ENCODE measurements at regions of chr14 and their contacts with region 1.

Region 1: DNA sequence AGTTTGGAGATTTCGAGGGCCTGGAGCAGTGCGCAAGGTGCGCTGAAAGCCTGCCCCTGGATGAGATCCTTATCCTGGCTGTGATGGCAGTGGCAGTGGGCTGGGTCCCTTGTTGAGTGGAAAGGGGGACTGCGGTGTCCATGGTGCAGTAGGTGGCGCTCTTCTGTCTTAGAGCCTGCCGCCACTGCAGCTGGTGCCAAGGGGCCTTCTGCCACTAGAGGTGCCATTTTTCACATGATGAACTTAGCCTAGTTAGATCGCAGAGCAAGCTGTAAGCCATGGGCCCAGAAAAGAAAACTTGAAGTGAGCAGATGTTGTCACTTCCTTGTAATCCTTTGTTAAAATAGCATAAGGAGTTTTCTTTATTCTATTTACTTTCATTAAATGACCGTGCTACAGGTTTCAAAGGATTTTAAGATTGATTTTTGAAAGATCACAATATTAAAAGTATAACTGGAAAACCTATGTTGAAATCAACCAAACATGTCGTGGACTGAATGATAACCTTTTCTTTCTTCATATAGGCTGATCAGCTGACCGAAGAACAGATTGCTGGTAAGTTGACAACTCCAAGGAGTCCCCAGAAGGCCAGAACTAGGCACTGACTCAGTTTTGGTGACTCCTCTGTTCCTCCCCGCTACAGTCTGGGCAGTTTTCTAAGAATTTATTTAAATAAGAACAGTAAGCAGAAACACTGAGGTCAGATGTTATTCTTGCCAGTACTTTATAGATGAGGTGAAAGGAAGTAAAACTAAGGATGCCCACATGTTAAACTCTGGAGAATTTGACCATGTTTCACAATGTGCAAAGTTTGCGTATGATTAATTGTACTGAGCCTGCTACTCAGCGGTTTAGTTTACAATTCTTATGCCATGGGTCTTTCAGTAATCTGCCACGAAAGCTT is 3.0 kb downstream of the CALM1 start:
- DNase-seq: peak; percentile 92
- ATAC-seq: peak; percentile 39
- H3K4me3 ChIP-seq: peak overlapping the region in 1 of 5 experiments; percentile 85
- H3K4me3 Mint-ChIP-seq: peak overlapping the region; percentile 96
- H3K27ac ChIP-seq: peak overlapping the region; percentile 93 to 95
- H3K27ac Mint-ChIP-seq: peak overlapping the region; percentile 98
- H3K4me1 ChIP-seq: peaks cover 39 to 45% of the 10 kb centered on the region in 2 donors
- H3K4me1 Mint-ChIP-seq: peaks cover 46% of the 10 kb centered on the region
- H3K27me3 ChIP-seq: no peaks in the 10 kb centered on the region
- H3K27me3 Mint-ChIP-seq: no peaks in the 10 kb centered on the region
- CTCF ChIP-seq: peak; percentile 100

Region 2: DNA sequence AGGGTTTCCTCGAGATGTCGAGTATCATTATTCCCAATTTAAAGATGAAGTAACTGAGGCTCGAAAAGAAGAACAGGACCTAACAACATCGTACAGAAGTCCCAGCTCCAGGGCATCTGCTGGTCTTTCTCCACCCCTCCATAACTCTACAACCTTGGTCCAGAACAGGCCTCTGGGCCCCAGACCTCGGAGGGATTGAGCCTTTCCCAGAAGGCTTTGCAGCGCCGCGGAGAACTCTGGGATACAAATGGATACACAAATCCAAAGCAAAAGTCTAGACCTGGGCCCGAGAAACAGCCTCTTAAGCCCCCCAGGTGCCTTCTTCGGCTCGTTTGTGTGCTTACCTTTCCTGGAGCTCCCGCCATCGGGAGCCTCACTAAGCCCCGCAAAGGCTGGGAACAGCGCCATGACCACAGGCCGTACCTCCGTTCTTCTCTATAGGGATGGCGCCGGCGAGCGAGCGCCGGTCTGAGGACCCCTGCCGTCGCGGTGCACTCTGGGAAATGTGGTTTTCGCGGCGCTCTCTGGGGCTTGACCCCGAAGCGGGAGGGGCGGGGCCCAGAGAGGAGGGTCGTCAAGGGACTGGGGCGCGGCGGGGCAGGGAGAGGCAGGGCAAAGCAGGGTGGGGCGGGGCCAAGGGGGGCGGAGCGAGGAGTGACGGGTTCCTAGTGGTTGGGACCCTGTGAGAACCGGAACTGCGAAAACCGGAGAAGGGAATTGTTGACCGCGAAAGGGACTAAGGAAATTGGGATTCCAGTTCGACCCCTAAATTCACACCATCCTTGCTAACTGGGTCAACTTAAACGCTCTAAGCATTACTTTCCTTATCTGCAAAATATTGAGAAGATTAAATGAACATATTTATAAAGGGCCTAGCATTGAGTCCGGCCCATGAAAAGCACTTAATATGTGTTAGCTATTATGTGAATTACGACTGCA is 68.0 kb before region 1 on chr14 and contains the start of gene NRDE2:
- CTCF ChIA-PET with region 1: interaction called, 6 read pairs
- POLR2A ChIA-PET with region 1: no interaction called
- intact Hi-C with region 1: loop called (anchors 1 kb)
- DNase-seq: peak; percentile 95
- ATAC-seq: peak; percentile 98
- H3K4me3 ChIP-seq: peak within 1 kb of the TSS; percentile 57 to 89 (median 79)
- H3K4me3 Mint-ChIP-seq: peak within 1 kb of the TSS; percentile 90
- H3K27ac ChIP-seq: peak within 1 kb of the TSS; percentile 67 to 77
- H3K27ac Mint-ChIP-seq: peak within 1 kb of the TSS; percentile 96
- H3K4me1 ChIP-seq: peaks cover 15 to 17% of the 10 kb centered on the region in 2 donors
- H3K4me1 Mint-ChIP-seq: peaks cover 22% of the 10 kb centered on the region
- H3K27me3 ChIP-seq: peaks cover 0 to 12% (median 4%) of the 10 kb centered on the region in 4 experiments
- H3K27me3 Mint-ChIP-seq: peaks cover 12% of the 10 kb centered on the region
- CTCF ChIP-seq: no peak
- total RNA-seq, gene NRDE2: 35.8 and 37.7 TPM in 2 replicates

Region 3: GRCh38 chr14:90388437-90388836 is 11.4 kb before region 1 on chr14:
- CTCF ChIA-PET with region 1: interaction called, 36 read pairs
- POLR2A ChIA-PET with region 1: interaction called, 117 read pairs
- intact Hi-C with region 1: loop called (anchors 1 kb)
- DNase-seq: no peak
- ATAC-seq: no peak
- H3K4me3 ChIP-seq: no peak overlapping the region
- H3K4me3 Mint-ChIP-seq: no peak overlapping the region
- H3K27ac ChIP-seq: no peak overlapping the region
- H3K27ac Mint-ChIP-seq: no peak overlapping the region
- H3K4me1 ChIP-seq: peaks cover 8 to 12% of the 10 kb centered on the region in 2 donors
- H3K4me1 Mint-ChIP-seq: peaks cover 9% of the 10 kb centered on the region
- H3K27me3 ChIP-seq: no peaks in the 10 kb centered on the region
- H3K27me3 Mint-ChIP-seq: peaks cover 5% of the 10 kb centered on the region
- CTCF ChIP-seq: no peak

Region 4: DNA sequence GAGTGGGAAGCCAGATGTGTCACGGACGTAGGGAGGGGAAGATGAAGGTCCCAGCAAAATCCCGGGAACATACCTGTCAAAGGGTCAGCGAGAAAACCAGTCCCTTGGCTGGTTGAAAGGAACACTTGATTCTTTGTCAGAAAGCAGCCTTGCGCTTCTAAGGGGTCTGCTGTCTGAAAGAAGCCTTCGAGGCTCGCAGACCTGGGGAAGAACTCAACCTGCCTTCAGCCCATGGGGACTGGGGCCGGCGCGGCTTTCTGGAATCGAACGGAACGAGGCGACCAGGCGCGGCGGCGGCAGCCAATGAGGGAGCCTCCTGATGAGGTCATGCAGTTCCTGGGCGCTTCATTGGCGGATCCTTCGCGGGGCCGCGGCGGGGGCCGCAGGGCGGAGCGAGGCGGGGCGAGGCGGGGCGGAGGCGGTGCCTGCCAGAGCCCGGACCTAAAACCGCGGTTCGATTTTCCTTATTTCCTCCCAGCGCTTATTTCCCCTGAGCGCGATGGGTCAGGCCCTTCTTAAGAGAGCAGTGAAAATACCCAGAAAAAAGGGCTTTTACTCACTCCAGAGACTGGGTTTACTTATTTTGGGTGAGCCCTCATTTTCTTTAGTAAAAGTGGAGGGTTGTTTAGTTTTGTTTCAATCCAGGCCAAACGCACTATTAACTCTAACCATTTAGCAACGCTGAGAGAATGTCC is 428.3 kb after region 1 on chr14:
- CTCF ChIA-PET with region 1: no interaction called
- POLR2A ChIA-PET with region 1: no interaction called
- intact Hi-C with region 1: loop called (anchors 5 kb)
- DNase-seq: peak; percentile 92
- ATAC-seq: peak; percentile 100
- H3K4me3 ChIP-seq: peak overlapping the region; percentile 44 to 58 (median 51)
- H3K4me3 Mint-ChIP-seq: peak overlapping the region; percentile 77
- H3K27ac ChIP-seq: peak overlapping the region; percentile 61 to 75
- H3K27ac Mint-ChIP-seq: peak overlapping the region; percentile 80
- H3K4me1 ChIP-seq: peaks cover 13 to 16% of the 10 kb centered on the region in 2 donors
- H3K4me1 Mint-ChIP-seq: peaks cover 16% of the 10 kb centered on the region
- H3K27me3 ChIP-seq: no peaks in the 10 kb centered on the region
- H3K27me3 Mint-ChIP-seq: no peaks in the 10 kb centered on the region
- CTCF ChIP-seq: no peak

Region 5: GRCh38 chr14:92106143-92106926 is 1706.5 kb after region 1 on chr14 and contains the start of gene ATXN3:
- CTCF ChIA-PET with region 1: no interaction called
- POLR2A ChIA-PET with region 1: no interaction called
- intact Hi-C with region 1: loop called (anchors 5 kb)
- DNase-seq: peak; percentile 97
- ATAC-seq: peak; percentile 86
- H3K4me3 ChIP-seq: peak within 1 kb of the TSS; percentile 74 to 90 (median 81)
- H3K4me3 Mint-ChIP-seq: peak within 1 kb of the TSS; percentile 98
- H3K27ac ChIP-seq: peak within 1 kb of the TSS; percentile 77 to 83
- H3K27ac Mint-ChIP-seq: peak within 1 kb of the TSS; percentile 90
- H3K4me1 ChIP-seq: peaks cover 5 to 27% of the 10 kb centered on the region in 2 donors
- H3K4me1 Mint-ChIP-seq: peaks cover 41% of the 10 kb centered on the region
- H3K27me3 ChIP-seq: no peaks in the 10 kb centered on the region
- H3K27me3 Mint-ChIP-seq: no peaks in the 10 kb centered on the region
- CTCF ChIP-seq: peak; percentile 77
- total RNA-seq, gene ATXN3: 51.6 and 59.5 TPM in 2 replicates